ENCODE measurements at regions of chr20 and their contacts with region 1.

Region 1: DNA sequence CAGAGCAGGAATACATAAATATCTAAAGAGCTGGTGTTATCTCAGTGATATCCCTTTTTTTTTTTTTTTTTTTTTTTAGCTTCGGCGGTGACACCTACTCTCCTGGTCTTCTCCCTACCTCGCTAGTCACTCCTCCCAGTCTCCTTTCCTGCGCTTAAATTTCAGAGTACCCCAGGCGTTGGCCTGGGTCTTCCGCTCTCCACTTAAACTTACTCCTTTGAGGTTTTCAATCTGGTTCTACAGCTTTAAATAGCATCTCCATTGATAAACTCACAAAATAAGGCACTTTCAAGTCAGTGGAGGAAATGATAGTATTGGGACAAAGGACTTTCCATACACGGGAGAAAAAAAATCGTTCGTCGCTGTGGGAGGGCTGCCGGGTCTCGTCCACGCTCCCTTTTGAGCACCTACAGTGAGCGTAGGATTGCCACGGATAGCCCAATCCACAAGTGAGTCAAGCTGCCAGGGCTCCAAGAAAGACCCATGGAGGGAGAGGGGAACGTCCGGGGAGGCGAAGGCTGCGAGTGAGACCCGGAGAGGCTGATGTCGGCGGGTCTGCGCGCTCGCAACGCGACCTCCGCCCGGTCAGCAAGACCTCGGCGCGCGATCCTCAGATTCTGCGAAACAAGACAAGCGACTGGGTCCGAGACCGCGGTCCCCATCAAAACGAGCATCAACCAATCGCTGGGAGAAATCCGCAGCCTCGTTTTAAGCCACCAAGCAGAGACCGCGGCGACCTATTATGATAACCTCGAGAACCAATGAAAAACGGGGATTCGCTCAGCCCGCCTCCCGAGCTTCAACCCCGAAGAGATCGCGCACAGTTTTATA is 672 bp upstream of the SRSF6 start:
- DNase-seq: peak; percentile 99
- H3K27ac ChIP-seq: peak overlapping the region; percentile 93
- CTCF ChIP-seq: no peak

Region 2: GRCh38 chr20:43467589-43467988 is 10.6 kb after region 1 on chr20:
- CTCF ChIA-PET with region 1: no interaction called
- POLR2A ChIA-PET with region 1: interaction called, 14 read pairs
- DNase-seq: no peak
- H3K27ac ChIP-seq: no peak overlapping the region
- CTCF ChIP-seq: no peak

Region 3: GRCh38 chr20:43472671-43473380 is 15.8 kb after region 1 on chr20:
- CTCF ChIA-PET with region 1: no interaction called
- POLR2A ChIA-PET with region 1: interaction called, 14 read pairs
- DNase-seq: no peak
- H3K27ac ChIP-seq: no peak overlapping the region
- CTCF ChIP-seq: no peak

Region 4: GRCh38 chr20:43699941-43700565 is 243.0 kb after region 1 on chr20:
- CTCF ChIA-PET with region 1: no interaction called
- POLR2A ChIA-PET with region 1: no interaction called
- DNase-seq: no peak
- H3K27ac ChIP-seq: no peak overlapping the region; the same call in 1 of the 2 replicates
- CTCF ChIP-seq: no peak

Measured in RWPE1 (cell line).